Aorta (tissue), 5 donors: ENCODE measurements at regions of chr9 and their contacts with region 1.

Region 1: DNA sequence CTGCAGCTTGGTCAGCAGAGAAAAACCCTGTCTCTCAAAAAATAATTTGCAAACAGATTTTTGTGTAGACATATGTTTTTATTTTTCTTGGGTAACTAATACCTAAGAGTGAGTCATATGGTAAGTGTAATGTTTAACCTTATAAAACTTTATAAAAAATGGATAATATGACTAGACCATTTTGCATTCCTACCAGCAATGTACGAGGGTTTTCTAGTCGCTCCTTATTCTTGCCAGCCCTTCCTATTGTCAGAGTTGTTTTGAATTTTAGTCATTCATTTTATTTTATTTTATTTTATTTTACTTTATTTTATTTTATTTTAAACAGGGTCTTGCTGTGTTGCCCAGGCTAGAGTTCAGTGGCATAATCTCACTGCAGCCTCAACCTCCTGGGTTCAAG is 37.8 kb downstream of the RABGAP1 start:
- DNase-seq: no peak
- ATAC-seq: no peak
- H3K4me3 ChIP-seq: no peak overlapping the region
- H3K27ac ChIP-seq: no peak overlapping the region
- H3K4me1 ChIP-seq: peaks cover 0 to 4% of the 10 kb centered on the region in 2 donors
- H3K27me3 ChIP-seq: no peaks in the 10 kb centered on the region

Region 2: GRCh38 chr9:122912964-122913673 is 65.5 kb before region 1 on chr9 and contains the start of gene ZBTB6:
- intact Hi-C with region 1: loop called in 1 of 2 experiments (anchors 10 kb)
- DNase-seq: peak; percentile 72 to 83
- ATAC-seq: peak; percentile 94
- H3K4me3 ChIP-seq: peak within 1 kb of the TSS; percentile 75 to 78
- H3K27ac ChIP-seq: peak within 1 kb of the TSS; percentile 59 to 72
- H3K4me1 ChIP-seq: peaks cover 0 to 1% of the 10 kb centered on the region in 2 donors
- H3K27me3 ChIP-seq: no peaks in the 10 kb centered on the region
- total RNA-seq, gene ZBTB6: 8.4 to 9.0 TPM